Activated T-helper 1 cell treated with anti-CD3 and anti-CD28 coated beads, Interleukin-12 subunit alpha, Interleukin-12 subunit beta, Interleukin-2, Interleukin-4 antibody, amounts not matched to agents 30 ng/mL and 10 ng/mL and 1 ng/mL, durations not matched to agents 14 hours and 24 hours and 36 hours (primary cell): ENCODE measurements at regions of chr4 and their contacts with region 1.

Region 1: DNA sequence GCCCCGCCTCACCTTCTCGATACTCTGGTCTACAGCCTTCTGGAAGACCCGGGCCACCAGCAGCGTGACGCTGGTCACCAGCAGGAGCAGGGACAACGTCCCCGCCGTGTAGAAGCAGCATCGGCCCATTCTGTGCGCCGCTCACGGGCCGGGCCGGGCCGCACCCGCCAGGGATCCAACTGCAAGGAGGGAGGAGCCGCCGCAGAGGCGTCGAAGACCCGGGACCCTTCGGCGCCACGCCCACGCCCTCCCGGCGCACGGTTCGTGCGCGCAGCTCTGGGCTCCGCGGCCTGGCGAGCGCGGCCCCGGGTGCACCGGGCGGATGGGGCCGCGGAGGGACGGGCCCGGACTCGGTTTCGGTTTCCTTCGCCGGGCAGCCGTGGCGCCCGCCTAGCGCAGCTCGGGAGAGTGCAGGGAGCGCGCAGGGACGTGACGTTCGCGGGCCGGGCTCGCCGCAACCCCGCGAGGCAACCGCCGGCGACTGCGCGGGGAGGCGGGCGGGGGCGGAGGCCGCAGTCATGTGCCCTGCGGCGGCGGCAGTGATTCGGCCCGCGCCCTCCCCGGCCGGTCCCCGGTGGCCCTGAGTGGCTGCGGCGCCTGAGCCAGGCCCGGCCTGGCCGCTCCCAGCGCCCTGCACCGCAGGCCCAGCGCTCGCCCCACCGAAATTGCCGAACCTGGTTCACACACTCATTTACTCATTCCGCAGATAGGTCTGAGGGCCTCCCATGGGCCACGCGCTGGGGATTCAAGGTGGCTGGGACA is at the start of gene SCARB2:
- DNase-seq: peak; percentile 72
- H3K4me3 Mint-ChIP-seq: peak within 1 kb of the TSS; percentile 79
- H3K27ac Mint-ChIP-seq: peak within 1 kb of the TSS; percentile 67
- H3K4me1 Mint-ChIP-seq: peaks cover 33% of the 10 kb centered on the region
- H3K27me3 Mint-ChIP-seq: peaks cover 34% of the 10 kb centered on the region
- total RNA-seq, gene SCARB2: 1.3 and 1.4 TPM in 2 replicates

Region 2: DNA sequence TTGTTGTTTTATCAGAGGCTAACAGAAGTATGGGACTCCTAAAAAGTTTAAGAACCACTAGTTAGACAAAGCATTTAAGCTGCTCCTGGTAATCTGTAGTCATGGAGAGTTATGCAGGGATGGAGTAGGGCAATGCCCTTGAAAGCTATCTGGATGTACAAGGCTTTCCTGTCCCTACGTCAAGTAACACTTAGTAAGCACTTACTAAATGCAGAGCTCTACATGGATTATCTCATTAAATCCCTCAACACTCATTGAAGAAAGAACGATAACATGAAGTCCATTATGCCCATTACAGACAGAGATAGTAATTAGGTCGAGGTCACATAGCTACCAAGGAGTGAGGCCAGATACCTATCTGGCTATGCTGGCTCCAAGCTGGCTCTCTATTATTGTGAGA is 344.5 kb before region 1 on chr4:
- intact Hi-C with region 1: no loop called
- DNase-seq: no peak
- H3K4me3 Mint-ChIP-seq: no peak overlapping the region
- H3K27ac Mint-ChIP-seq: no peak overlapping the region
- H3K4me1 Mint-ChIP-seq: no peaks in the 10 kb centered on the region
- H3K27me3 Mint-ChIP-seq: peaks cover 4% of the 10 kb centered on the region

Region 3: DNA sequence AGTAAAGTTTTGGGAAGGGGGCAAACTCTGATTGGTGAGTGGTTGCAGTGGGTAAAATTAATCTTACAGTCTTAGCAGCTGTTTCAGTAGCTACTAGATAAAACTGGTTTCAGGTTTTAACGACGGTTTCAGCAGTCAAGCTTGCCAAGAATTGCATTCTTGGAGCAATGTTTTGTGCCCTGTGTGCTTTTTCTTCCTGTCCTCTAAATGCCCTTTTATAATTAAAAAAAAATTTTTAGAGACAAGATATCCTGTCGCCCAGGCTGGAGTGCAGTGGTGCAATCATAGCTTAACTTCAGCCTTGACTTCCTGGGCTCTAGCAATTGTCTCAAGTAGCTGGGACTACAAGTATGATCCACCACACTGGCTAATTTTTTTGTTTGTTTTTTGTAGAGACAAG is 305.0 kb before region 1 on chr4:
- intact Hi-C with region 1: no loop called
- DNase-seq: no peak
- H3K4me3 Mint-ChIP-seq: no peak overlapping the region
- H3K27ac Mint-ChIP-seq: no peak overlapping the region
- H3K4me1 Mint-ChIP-seq: no peaks in the 10 kb centered on the region
- H3K27me3 Mint-ChIP-seq: no peaks in the 10 kb centered on the region

Region 4: GRCh38 chr4:75989846-75990528 is 223.6 kb before region 1 on chr4:
- intact Hi-C with region 1: loop called (anchors 5 kb)
- DNase-seq: no peak
- H3K4me3 Mint-ChIP-seq: peak overlapping the region; percentile 93
- H3K27ac Mint-ChIP-seq: peak overlapping the region; percentile 83
- H3K4me1 Mint-ChIP-seq: peaks cover 27% of the 10 kb centered on the region
- H3K27me3 Mint-ChIP-seq: no peaks in the 10 kb centered on the region

Region 5: DNA sequence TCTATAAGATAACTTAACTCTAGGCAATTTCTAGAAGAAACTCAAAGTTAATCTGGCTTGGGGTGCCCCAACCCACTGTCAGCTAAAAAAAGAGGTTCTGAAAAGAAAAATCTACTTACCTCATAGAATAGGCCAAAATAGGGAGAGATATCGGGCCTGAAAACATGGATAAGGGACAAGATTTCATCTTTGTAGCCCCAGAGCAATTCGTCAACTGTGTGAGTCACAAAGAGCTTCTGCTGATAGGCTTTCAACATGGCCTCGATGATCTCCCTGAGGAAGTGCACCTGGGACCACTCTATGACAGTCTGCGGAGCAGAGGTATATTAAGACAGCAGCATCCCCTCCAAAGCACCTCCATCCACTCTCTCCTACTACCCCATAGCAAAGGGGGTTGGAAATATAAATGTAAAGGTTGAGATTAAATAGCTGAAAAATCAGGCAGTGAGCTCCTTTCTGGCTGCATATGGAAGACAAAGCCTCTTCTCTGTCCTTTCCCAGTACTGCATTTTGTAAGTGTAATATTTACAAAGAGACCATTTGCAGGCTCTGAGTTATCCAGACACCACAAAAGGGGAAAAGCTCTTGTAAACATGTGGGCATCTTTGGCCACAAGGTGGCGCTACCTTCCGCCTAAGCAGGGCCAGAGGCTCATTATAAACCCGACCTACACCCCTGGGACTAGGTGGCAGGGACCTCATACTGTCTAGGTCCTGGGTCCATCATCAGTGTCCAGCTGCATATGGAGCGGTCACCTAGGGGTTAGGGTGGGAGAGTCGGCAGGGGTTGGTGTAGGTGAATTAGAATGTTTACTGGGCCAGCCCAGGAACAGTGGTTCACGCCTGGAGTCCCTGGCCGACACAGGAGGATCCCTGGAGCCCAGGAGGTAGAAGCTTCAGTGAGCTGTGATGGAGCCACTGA is 33.9 kb before region 1 on chr4:
- intact Hi-C with region 1: loop called (anchors 1 kb)
- DNase-seq: peak; percentile 63
- H3K4me3 Mint-ChIP-seq: no peak overlapping the region
- H3K27ac Mint-ChIP-seq: no peak overlapping the region
- H3K4me1 Mint-ChIP-seq: no peaks in the 10 kb centered on the region
- H3K27me3 Mint-ChIP-seq: no peaks in the 10 kb centered on the region

Region 6: DNA sequence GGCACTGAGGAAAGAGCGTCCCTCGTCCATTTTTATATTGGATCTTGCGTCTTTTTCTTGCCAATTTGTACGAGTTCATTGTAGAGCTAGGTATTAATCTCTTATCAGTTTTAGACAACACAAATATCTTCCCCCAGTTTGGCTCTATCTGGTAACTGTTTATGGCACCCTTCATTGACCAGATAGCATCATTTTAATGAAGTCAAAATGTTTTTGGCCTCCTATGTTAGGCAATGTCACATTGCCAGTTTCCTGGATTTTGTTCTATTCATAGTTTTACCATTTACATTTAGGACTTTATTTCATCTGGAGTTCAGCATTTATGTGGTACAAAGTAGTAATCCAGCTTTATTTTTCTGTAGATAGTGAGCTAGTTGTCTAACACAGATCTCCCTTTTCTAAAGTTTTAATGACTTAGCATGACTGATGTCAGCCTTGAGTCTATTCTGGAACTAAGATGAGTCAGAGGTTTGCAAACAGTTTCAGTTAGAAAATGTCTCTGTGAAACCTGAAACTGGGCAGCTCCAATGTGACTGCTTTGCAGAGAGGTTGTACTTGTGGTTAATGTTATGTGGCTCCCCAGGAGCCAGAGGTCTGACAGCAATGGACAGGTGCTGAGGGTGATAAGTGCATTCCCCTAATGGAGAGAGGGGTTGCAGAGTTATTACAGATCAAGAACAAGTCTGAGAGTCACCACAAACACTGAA is 87.6 kb after region 1 on chr4:
- intact Hi-C with region 1: loop called (anchors 1 kb)
- DNase-seq: peak; percentile 32
- H3K4me3 Mint-ChIP-seq: peak overlapping the region; percentile 7
- H3K27ac Mint-ChIP-seq: no peak overlapping the region
- H3K4me1 Mint-ChIP-seq: peaks cover 62% of the 10 kb centered on the region
- H3K27me3 Mint-ChIP-seq: peaks cover 3% of the 10 kb centered on the region